B cell (primary cell): ENCODE measurements at regions of chr10 and their contacts with region 1.

Region 1: DNA sequence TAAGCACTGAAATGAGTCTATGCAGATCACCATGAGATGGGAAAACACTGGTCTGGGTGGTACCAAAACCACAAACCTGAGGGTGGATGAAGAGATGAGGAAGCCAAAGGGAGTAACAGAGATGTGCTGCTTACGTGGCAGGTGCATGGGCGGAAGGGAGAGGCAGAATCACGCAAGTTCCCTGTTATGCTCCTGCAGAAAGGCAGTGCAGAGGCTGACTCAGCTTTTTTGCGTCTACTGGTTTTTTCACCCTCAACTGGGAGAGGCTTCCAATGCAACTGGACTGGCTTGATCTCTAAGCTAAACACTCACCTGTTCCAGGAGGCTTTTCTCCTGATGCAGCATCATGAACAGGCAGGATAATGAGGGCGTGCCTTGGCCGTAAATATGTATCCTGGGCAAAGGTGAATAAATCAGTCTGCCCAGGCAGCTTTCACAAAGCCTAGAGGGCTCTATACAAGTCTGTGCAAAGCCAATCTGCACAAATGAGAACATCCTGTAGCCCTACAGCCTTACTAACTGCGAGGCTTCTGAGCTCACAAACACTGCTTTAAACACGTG is 95.4 kb upstream of the AFAP1L2 start:
- DNase-seq: peak; percentile 75
- ATAC-seq: peak; percentile 26
- H3K4me3 ChIP-seq: peak overlapping the region in 3 of 5 experiments; percentile 4 to 51 (median 32)
- H3K4me3 Mint-ChIP-seq: peak overlapping the region; percentile 79
- H3K27ac ChIP-seq: peak overlapping the region; percentile 90 to 96
- H3K27ac Mint-ChIP-seq: peak overlapping the region; percentile 94
- H3K4me1 ChIP-seq: peaks cover 69 to 82% of the 10 kb centered on the region in 2 donors
- H3K4me1 Mint-ChIP-seq: peaks cover 84% of the 10 kb centered on the region
- H3K27me3 ChIP-seq: no peaks in the 10 kb centered on the region
- H3K27me3 Mint-ChIP-seq: no peaks in the 10 kb centered on the region
- CTCF ChIP-seq: no peak

Region 2: GRCh38 chr10:114479307-114479706 is 20.4 kb before region 1 on chr10:
- CTCF ChIA-PET with region 1: no interaction called
- POLR2A ChIA-PET with region 1: no interaction called
- intact Hi-C with region 1: no loop called
- DNase-seq: no peak
- ATAC-seq: no peak
- H3K4me3 ChIP-seq: no peak overlapping the region
- H3K4me3 Mint-ChIP-seq: no peak overlapping the region
- H3K27ac ChIP-seq: no peak overlapping the region
- H3K27ac Mint-ChIP-seq: no peak overlapping the region
- H3K4me1 ChIP-seq: no peaks in the 10 kb centered on the region
- H3K4me1 Mint-ChIP-seq: peaks cover 26% of the 10 kb centered on the region
- H3K27me3 ChIP-seq: no peaks in the 10 kb centered on the region
- H3K27me3 Mint-ChIP-seq: no peaks in the 10 kb centered on the region
- CTCF ChIP-seq: no peak

Region 3: GRCh38 chr10:114513381-114513792 is 13.7 kb after region 1 on chr10:
- CTCF ChIA-PET with region 1: interaction called, 22 read pairs
- POLR2A ChIA-PET with region 1: interaction called, 3 read pairs
- intact Hi-C with region 1: loop called (anchors 2 kb)
- DNase-seq: no peak
- ATAC-seq: no peak
- H3K4me3 ChIP-seq: no peak overlapping the region
- H3K4me3 Mint-ChIP-seq: no peak overlapping the region
- H3K27ac ChIP-seq: no peak overlapping the region
- H3K27ac Mint-ChIP-seq: no peak overlapping the region
- H3K4me1 ChIP-seq: peaks cover 40 to 44% of the 10 kb centered on the region in 2 donors
- H3K4me1 Mint-ChIP-seq: peaks cover 79% of the 10 kb centered on the region
- H3K27me3 ChIP-seq: no peaks in the 10 kb centered on the region
- H3K27me3 Mint-ChIP-seq: no peaks in the 10 kb centered on the region
- CTCF ChIP-seq: no peak

Region 4: GRCh38 chr10:114526504-114527238 is 27.0 kb after region 1 on chr10:
- CTCF ChIA-PET with region 1: interaction called, 115 read pairs
- POLR2A ChIA-PET with region 1: interaction called, 44 read pairs
- intact Hi-C with region 1: loop called (anchors 1 kb)
- DNase-seq: peak; percentile 96
- ATAC-seq: peak; percentile 96
- H3K4me3 ChIP-seq: peak overlapping the region; percentile 64 to 84 (median 79)
- H3K4me3 Mint-ChIP-seq: peak overlapping the region; percentile 95
- H3K27ac ChIP-seq: peak overlapping the region; percentile 79 to 96
- H3K27ac Mint-ChIP-seq: peak overlapping the region; percentile 99
- H3K4me1 ChIP-seq: peaks cover 42 to 51% of the 10 kb centered on the region in 2 donors
- H3K4me1 Mint-ChIP-seq: peaks cover 59% of the 10 kb centered on the region
- H3K27me3 ChIP-seq: no peaks in the 10 kb centered on the region
- H3K27me3 Mint-ChIP-seq: no peaks in the 10 kb centered on the region
- CTCF ChIP-seq: no peak

Region 5: GRCh38 chr10:114821293-114821914 is 321.7 kb after region 1 on chr10 and contains the start of gene FHIP2A:
- CTCF ChIA-PET with region 1: interaction called, 4 read pairs
- POLR2A ChIA-PET with region 1: interaction called, 7 read pairs
- intact Hi-C with region 1: loop called (anchors 1 kb)
- DNase-seq: peak; percentile 90
- ATAC-seq: peak; percentile 93
- H3K4me3 ChIP-seq: peak within 1 kb of the TSS; percentile 53 to 86 (median 78)
- H3K4me3 Mint-ChIP-seq: peak within 1 kb of the TSS; percentile 94
- H3K27ac ChIP-seq: peak within 1 kb of the TSS; percentile 57 to 83
- H3K27ac Mint-ChIP-seq: peak within 1 kb of the TSS; percentile 96
- H3K4me1 ChIP-seq: peaks cover 6 to 13% of the 10 kb centered on the region in 2 donors
- H3K4me1 Mint-ChIP-seq: peaks cover 29% of the 10 kb centered on the region
- H3K27me3 ChIP-seq: no peaks in the 10 kb centered on the region
- H3K27me3 Mint-ChIP-seq: no peaks in the 10 kb centered on the region
- CTCF ChIP-seq: peak; percentile 64
- total RNA-seq, gene FHIP2A: 18.2 and 28.6 TPM in 2 replicates